ENCODE measurements at regions of chr16 and their contacts with region 1.

Region 1: DNA sequence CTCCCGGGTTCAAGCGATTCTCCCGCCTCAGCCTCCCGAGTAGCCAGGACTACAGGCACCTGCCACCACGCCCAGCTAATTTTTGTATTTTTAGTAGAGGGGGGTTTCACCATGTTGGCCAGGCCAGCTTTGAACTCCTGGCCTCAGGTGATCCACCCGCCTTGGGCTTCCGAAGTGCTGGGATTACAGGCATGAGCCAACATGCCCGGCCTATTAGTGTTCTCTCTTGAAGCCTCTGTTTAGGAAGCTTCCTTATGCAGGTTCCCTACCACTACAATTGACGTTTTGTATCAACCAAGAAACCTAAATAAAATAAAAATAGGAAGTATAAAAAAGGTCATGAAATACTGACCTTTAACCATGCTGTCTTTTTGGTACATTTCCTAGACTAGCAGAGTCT is 16.0 kb downstream of the CHST5 start:
- DNase-seq: no peak
- ATAC-seq: no peak
- H3K4me3 Mint-ChIP-seq: no peak overlapping the region
- H3K27ac Mint-ChIP-seq: no peak overlapping the region
- H3K4me1 Mint-ChIP-seq: peaks cover 14% of the 10 kb centered on the region
- H3K27me3 Mint-ChIP-seq: no peaks in the 10 kb centered on the region
- CTCF ChIP-seq: no peak

Region 2: DNA sequence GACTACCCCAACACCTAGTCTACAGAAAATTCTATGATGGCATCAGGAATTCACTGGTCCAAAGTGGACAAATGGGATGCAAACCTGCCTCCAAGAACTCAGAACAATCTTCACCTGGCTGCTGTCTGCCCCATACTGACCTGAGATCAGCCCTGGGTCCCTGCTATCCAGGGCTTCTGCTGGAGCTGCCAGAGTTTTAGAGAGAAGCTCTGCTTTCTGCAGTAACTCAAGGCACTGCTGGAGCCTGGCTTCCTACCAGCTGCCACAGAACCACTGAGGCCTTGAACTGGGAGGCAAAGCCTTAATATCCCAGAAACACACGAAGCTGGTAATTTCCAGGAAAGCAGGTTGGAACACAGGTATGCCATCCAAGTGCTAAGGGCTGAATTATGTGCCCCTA is 62.9 kb before region 1 on chr16:
- CTCF ChIA-PET with region 1: interaction called, 11 read pairs
- POLR2A ChIA-PET with region 1: interaction called, 3 read pairs
- DNase-seq: no peak
- ATAC-seq: no peak
- H3K4me3 Mint-ChIP-seq: no peak overlapping the region
- H3K27ac Mint-ChIP-seq: peak overlapping the region; percentile 61
- H3K4me1 Mint-ChIP-seq: peaks cover 68% of the 10 kb centered on the region
- H3K27me3 Mint-ChIP-seq: no peaks in the 10 kb centered on the region
- CTCF ChIP-seq: no peak

Region 3: GRCh38 chr16:75478074-75478473 is 41.8 kb before region 1 on chr16:
- CTCF ChIA-PET with region 1: interaction called, 55 read pairs
- POLR2A ChIA-PET with region 1: interaction called, 4 read pairs
- DNase-seq: no peak
- ATAC-seq: no peak
- H3K4me3 Mint-ChIP-seq: no peak overlapping the region
- H3K27ac Mint-ChIP-seq: peak overlapping the region; percentile 62
- H3K4me1 Mint-ChIP-seq: no peaks in the 10 kb centered on the region; the same call in 1 of the 2 replicates
- H3K27me3 Mint-ChIP-seq: no peaks in the 10 kb centered on the region
- CTCF ChIP-seq: no peak

Region 4: GRCh38 chr16:75501108-75501758 is 18.6 kb before region 1 on chr16:
- CTCF ChIA-PET with region 1: interaction called, 91 read pairs
- POLR2A ChIA-PET with region 1: interaction called, 6 read pairs
- DNase-seq: no peak
- ATAC-seq: no peak
- H3K4me3 Mint-ChIP-seq: no peak overlapping the region
- H3K27ac Mint-ChIP-seq: no peak overlapping the region
- H3K4me1 Mint-ChIP-seq: no peaks in the 10 kb centered on the region
- H3K27me3 Mint-ChIP-seq: no peaks in the 10 kb centered on the region
- CTCF ChIP-seq: no peak

Region 5: GRCh38 chr16:75550211-75550662 is 30.4 kb after region 1 on chr16:
- CTCF ChIA-PET with region 1: interaction called, 57 read pairs
- POLR2A ChIA-PET with region 1: interaction called, 4 read pairs
- DNase-seq: peak; percentile 62
- ATAC-seq: peak; percentile 84
- H3K4me3 Mint-ChIP-seq: no peak overlapping the region
- H3K27ac Mint-ChIP-seq: peak overlapping the region; percentile 46
- H3K4me1 Mint-ChIP-seq: peaks cover 16% of the 10 kb centered on the region
- H3K27me3 Mint-ChIP-seq: no peaks in the 10 kb centered on the region
- CTCF ChIP-seq: no peak

Region 6: GRCh38 chr16:75590920-75591843 is 71.3 kb after region 1 on chr16:
- CTCF ChIA-PET with region 1: interaction called, 18 read pairs
- POLR2A ChIA-PET with region 1: interaction called, 5 read pairs
- DNase-seq: no peak
- ATAC-seq: no peak
- H3K4me3 Mint-ChIP-seq: no peak overlapping the region
- H3K27ac Mint-ChIP-seq: peak overlapping the region; percentile 86
- H3K4me1 Mint-ChIP-seq: peaks cover 52% of the 10 kb centered on the region
- H3K27me3 Mint-ChIP-seq: no peaks in the 10 kb centered on the region
- CTCF ChIP-seq: no peak